B cell (primary cell): ENCODE measurements at regions of chr19 and their contacts with region 1.

Region 1: DNA sequence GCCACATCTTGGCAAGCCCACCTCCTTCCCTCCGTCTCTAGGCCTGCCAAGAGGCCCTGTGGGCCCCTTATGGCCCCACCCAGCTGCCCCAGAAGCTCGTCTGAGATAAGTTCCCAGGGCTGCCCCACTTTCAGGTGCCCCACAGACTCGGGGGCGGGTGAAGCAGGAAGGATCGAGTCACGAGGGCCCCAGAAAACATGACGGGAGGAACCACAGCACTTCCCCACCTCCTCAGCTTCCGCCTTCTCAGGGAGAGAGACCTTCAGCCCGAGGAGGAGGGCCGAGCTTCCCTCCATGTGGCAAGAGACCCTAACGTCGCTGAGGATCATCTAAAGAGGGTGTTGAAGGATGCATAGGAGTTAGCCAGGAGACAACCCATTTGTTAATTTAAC is 4.5 kb upstream of the IL12RB1 start:
- DNase-seq: peak; percentile 91
- ATAC-seq: peak; percentile 65
- H3K4me3 ChIP-seq: peak overlapping the region in 2 of 5 experiments; percentile 18 to 44
- H3K4me3 Mint-ChIP-seq: peak overlapping the region; percentile 80
- H3K27ac ChIP-seq: peak overlapping the region; percentile 94 to 97
- H3K27ac Mint-ChIP-seq: peak overlapping the region; percentile 97
- H3K4me1 ChIP-seq: peaks cover 52 to 62% of the 10 kb centered on the region in 2 donors
- H3K4me1 Mint-ChIP-seq: peaks cover 54% of the 10 kb centered on the region
- H3K27me3 ChIP-seq: no peaks in the 10 kb centered on the region
- H3K27me3 Mint-ChIP-seq: no peaks in the 10 kb centered on the region
- CTCF ChIP-seq: no peak

Region 2: GRCh38 chr19:18102916-18103542 is 11.8 kb after region 1 on chr19:
- CTCF ChIA-PET with region 1: interaction called, 58 read pairs
- POLR2A ChIA-PET with region 1: interaction called, 23 read pairs
- intact Hi-C with region 1: loop called (anchors 2 kb)
- DNase-seq: no peak
- ATAC-seq: no peak
- H3K4me3 ChIP-seq: no peak overlapping the region
- H3K4me3 Mint-ChIP-seq: peak overlapping the region; percentile 60
- H3K27ac ChIP-seq: peak overlapping the region in 1 of 2 donors; percentile 71
- H3K27ac Mint-ChIP-seq: peak overlapping the region; percentile 29
- H3K4me1 ChIP-seq: peaks cover 46 to 78% of the 10 kb centered on the region in 2 donors
- H3K4me1 Mint-ChIP-seq: peaks cover 67% of the 10 kb centered on the region
- H3K27me3 ChIP-seq: no peaks in the 10 kb centered on the region
- H3K27me3 Mint-ChIP-seq: no peaks in the 10 kb centered on the region
- CTCF ChIP-seq: no peak

Region 3: DNA sequence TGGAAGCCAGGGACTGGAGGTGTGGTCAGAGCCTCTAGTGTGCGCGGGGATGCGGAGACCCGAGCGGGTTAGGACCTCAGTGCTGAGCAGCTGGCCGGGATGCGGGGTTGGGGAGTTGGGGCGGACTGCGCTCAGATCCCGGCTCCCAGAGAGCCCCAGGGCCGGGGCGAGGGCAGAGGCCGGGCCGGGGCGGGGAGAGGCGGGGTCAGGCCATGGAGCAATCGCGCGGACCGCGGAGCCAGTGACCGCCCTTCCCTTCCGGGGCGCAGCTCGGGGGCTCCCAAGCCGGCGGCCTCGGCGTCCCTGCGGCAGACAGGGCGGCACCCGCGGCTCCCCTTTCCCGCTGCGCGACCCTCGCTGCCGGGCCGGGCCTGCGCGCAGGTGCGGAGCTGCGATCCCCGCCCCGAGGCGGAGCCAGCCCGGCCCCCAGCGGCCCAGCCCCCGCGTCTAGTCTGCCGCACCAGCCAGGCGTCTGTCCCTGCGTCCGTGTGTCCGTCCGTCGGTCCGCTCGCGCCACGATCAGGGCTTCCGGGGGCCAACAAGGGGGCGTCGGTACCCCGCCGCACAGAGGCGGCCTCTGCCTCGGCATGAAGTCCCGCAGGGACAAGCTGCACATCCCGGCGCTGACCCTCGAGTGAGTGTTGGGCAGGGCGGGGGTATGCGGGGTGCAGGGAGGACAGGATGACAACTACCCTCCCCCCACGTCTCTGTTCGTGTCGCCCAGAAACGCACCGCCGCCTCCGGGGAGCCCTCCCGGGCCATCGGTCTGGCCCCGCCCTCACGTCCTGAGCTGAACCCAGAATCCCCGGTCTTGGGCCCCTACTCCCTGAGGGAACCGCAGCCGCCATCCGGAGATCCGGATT is 18.8 kb after region 1 on chr19:
- CTCF ChIA-PET with region 1: interaction called, 58 read pairs
- POLR2A ChIA-PET with region 1: interaction called, 13 read pairs
- intact Hi-C with region 1: loop called (anchors 2 kb)
- DNase-seq: peak; percentile 61
- ATAC-seq: peak; percentile 48
- H3K4me3 ChIP-seq: peak overlapping the region; percentile 22 to 71 (median 64)
- H3K4me3 Mint-ChIP-seq: peak overlapping the region; percentile 79
- H3K27ac ChIP-seq: peak overlapping the region; percentile 49 to 82
- H3K27ac Mint-ChIP-seq: peak overlapping the region; percentile 84
- H3K4me1 ChIP-seq: peaks cover 53 to 65% of the 10 kb centered on the region in 2 donors
- H3K4me1 Mint-ChIP-seq: peaks cover 65% of the 10 kb centered on the region
- H3K27me3 ChIP-seq: no peaks in the 10 kb centered on the region
- H3K27me3 Mint-ChIP-seq: no peaks in the 10 kb centered on the region
- CTCF ChIP-seq: no peak

Region 4: GRCh38 chr19:18117692-18118378 is 26.6 kb after region 1 on chr19:
- CTCF ChIA-PET with region 1: interaction called, 58 read pairs
- POLR2A ChIA-PET with region 1: interaction called, 10 read pairs
- intact Hi-C with region 1: no loop called
- DNase-seq: peak; percentile 96
- ATAC-seq: peak; percentile 94
- H3K4me3 ChIP-seq: peak overlapping the region in 4 of 5 experiments; percentile 64 to 71 (median 66)
- H3K4me3 Mint-ChIP-seq: peak overlapping the region; percentile 86
- H3K27ac ChIP-seq: peak overlapping the region; percentile 47 to 76
- H3K27ac Mint-ChIP-seq: peak overlapping the region; percentile 85
- H3K4me1 ChIP-seq: peaks cover 30 to 36% of the 10 kb centered on the region in 2 donors
- H3K4me1 Mint-ChIP-seq: peaks cover 52% of the 10 kb centered on the region
- H3K27me3 ChIP-seq: no peaks in the 10 kb centered on the region
- H3K27me3 Mint-ChIP-seq: no peaks in the 10 kb centered on the region
- CTCF ChIP-seq: no peak

Region 5: GRCh38 chr19:18304458-18305310 is 213.5 kb after region 1 on chr19:
- CTCF ChIA-PET with region 1: no interaction called
- POLR2A ChIA-PET with region 1: no interaction called
- intact Hi-C with region 1: no loop called
- DNase-seq: peak; percentile 89
- ATAC-seq: peak; percentile 64
- H3K4me3 ChIP-seq: peak overlapping the region in 4 of 5 experiments; percentile 51 to 60 (median 54)
- H3K4me3 Mint-ChIP-seq: peak overlapping the region; percentile 95
- H3K27ac ChIP-seq: peak overlapping the region; percentile 98 to 99
- H3K27ac Mint-ChIP-seq: peak overlapping the region; percentile 100
- H3K4me1 ChIP-seq: peaks cover 44 to 68% of the 10 kb centered on the region in 2 donors
- H3K4me1 Mint-ChIP-seq: peaks cover 44% of the 10 kb centered on the region
- H3K27me3 ChIP-seq: no peaks in the 10 kb centered on the region
- H3K27me3 Mint-ChIP-seq: no peaks in the 10 kb centered on the region
- CTCF ChIP-seq: no peak